Activated CD4-positive, alpha-beta T cell treated with anti-CD3 and anti-CD28 coated beads for 36 hours (primary cell): ENCODE measurements at regions of chr9 and their contacts with region 1.

Region 1: GRCh38 chr9:132556714-132557113 is 25.7 kb upstream of the BARHL1 start:
- DNase-seq: no peak
- ATAC-seq: no peak
- H3K4me3 Mint-ChIP-seq: no peak overlapping the region
- H3K27ac Mint-ChIP-seq: no peak overlapping the region
- H3K4me1 Mint-ChIP-seq: no peaks in the 10 kb centered on the region
- H3K27me3 Mint-ChIP-seq: peaks cover 20% of the 10 kb centered on the region

Region 2: DNA sequence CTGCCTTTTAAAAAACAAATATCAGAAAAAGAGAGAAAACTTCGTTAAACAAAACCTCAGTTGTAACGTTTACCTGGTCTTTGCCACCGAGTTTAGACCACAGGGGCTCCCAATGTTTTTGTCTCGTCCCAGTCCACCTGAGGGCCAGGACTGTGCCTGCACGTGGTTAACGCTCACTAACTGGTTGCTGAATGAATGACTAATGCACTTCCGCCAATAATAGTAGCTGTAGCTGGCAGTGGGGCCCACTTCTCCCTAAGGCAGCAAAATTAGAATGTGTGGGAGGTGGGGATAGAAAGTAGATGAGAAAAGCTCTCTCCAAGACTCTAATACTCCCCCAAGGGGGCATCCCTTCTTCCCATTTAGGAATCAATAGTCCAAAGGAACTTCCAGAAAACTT is 448.0 kb before region 1 on chr9:
- CTCF ChIA-PET with region 1: no interaction called
- POLR2A ChIA-PET with region 1: no interaction called
- intact Hi-C with region 1: no loop called
- DNase-seq: no peak
- ATAC-seq: no peak
- H3K4me3 Mint-ChIP-seq: no peak overlapping the region
- H3K27ac Mint-ChIP-seq: no peak overlapping the region
- H3K4me1 Mint-ChIP-seq: no peaks in the 10 kb centered on the region
- H3K27me3 Mint-ChIP-seq: peaks cover 36% of the 10 kb centered on the region

Region 3: GRCh38 chr9:133155156-133155555 is 598.4 kb after region 1 on chr9:
- CTCF ChIA-PET with region 1: no interaction called
- POLR2A ChIA-PET with region 1: no interaction called
- intact Hi-C with region 1: loop called in 1 of 2 experiments (anchors 5 kb)
- DNase-seq: no peak
- ATAC-seq: no peak
- H3K4me3 Mint-ChIP-seq: no peak overlapping the region
- H3K27ac Mint-ChIP-seq: no peak overlapping the region
- H3K4me1 Mint-ChIP-seq: no peaks in the 10 kb centered on the region
- H3K27me3 Mint-ChIP-seq: no peaks in the 10 kb centered on the region